ENCODE measurements at regions of chrX and their contacts with region 1.

Region 1: DNA sequence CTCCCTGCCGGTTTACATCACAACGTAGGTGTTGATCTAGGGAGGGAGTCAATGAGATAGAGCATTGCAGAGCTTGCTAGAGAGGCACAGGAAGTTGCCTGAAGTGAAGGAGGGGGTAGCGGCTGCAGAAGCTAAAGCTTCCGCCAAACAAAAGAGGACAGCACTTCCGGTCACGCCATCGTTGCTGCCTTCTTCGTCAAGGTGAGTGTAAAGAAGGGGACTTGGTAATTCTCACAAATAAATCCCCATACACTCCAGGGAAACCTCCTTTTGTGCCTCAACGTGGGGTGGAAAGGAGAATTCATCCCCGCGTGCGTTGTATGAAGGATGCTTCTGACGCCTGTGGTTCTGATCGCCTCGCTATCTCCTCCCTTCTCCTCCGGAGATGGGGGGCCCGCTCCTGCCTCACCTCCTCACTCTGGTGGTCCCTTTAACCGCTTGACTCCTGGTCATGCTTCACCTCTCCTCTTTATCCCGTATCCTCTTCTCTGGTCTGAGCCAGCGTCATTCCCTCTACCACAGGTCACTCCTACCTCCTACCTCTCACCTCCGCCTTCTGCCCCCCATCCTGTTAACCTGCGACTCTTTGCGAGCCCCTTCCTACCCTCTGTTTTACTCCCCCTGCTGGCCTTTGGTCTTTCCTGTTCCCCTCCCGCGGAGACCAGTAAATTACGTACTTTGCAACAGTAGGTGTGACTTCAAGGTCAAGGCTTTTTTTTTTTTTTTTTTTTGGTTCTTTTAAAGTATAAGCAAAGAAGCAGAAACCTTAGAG is 59.9 kb downstream of the GSPT2 start:
- DNase-seq: peak; percentile 6 to 61 (median 46)
- ATAC-seq: peak; percentile 90
- H3K4me3 ChIP-seq: peak overlapping the region; percentile 63
- H3K4me3 Mint-ChIP-seq: peak overlapping the region; percentile 93 to 99 (median 96)
- H3K27ac ChIP-seq: peak overlapping the region; percentile 74
- H3K27ac Mint-ChIP-seq: peak overlapping the region; percentile 93 to 99 (median 98)
- H3K4me1 ChIP-seq: peaks cover 5 to 8% of the 10 kb centered on the region in 2 donors
- H3K4me1 Mint-ChIP-seq: peaks cover 6 to 48% (median 27%) of the 10 kb centered on the region in 7 donors
- H3K27me3 ChIP-seq: no peaks in the 10 kb centered on the region
- H3K27me3 Mint-ChIP-seq: peaks cover 0 to 5% (median 0%) of the 10 kb centered on the region in 5 donors

Region 2: DNA sequence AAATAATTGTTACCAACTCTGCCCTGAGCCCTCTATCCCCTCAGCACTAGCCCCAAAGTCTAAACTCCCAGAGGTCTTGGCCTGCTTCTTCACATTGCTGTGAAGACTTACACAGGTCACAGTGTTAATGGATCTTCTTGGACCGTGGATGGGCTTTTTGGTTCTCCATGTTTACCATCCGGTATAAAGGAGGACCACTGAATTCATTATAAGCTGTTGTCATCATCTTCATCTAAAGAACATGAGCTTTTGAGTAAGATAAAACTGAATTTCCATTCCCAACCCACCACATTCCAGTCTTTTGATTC is 315.2 kb before region 1 on chrX:
- CTCF ChIA-PET with region 1: no interaction called
- POLR2A ChIA-PET with region 1: no interaction called
- intact Hi-C with region 1: loop called in 1 of 2 experiments (anchors 5 kb)
- DNase-seq: no peak
- ATAC-seq: no peak
- H3K4me3 ChIP-seq: no peak overlapping the region
- H3K4me3 Mint-ChIP-seq: no peak overlapping the region
- H3K27ac ChIP-seq: no peak overlapping the region
- H3K27ac Mint-ChIP-seq: no peak overlapping the region
- H3K4me1 ChIP-seq: no peaks in the 10 kb centered on the region
- H3K4me1 Mint-ChIP-seq: no peaks in the 10 kb centered on the region
- H3K27me3 ChIP-seq: no peaks in the 10 kb centered on the region
- H3K27me3 Mint-ChIP-seq: no peaks in the 10 kb centered on the region

Region 3: GRCh38 chrX:51614353-51615012 is 188.6 kb before region 1 on chrX:
- CTCF ChIA-PET with region 1: no interaction called
- POLR2A ChIA-PET with region 1: no interaction called
- intact Hi-C with region 1: loop called in 1 of 2 experiments (anchors 2 kb)
- DNase-seq: peak in 5 of 9 donors; percentile 2 to 24 (median 18)
- ATAC-seq: no peak
- H3K4me3 ChIP-seq: no peak overlapping the region
- H3K4me3 Mint-ChIP-seq: no peak overlapping the region
- H3K27ac ChIP-seq: no peak overlapping the region
- H3K27ac Mint-ChIP-seq: no peak overlapping the region
- H3K4me1 ChIP-seq: no peaks in the 10 kb centered on the region
- H3K4me1 Mint-ChIP-seq: peaks cover 0 to 8% (median 3%) of the 10 kb centered on the region in 7 donors
- H3K27me3 ChIP-seq: no peaks in the 10 kb centered on the region
- H3K27me3 Mint-ChIP-seq: peaks cover 17 to 38% (median 30%) of the 10 kb centered on the region in 5 donors

Region 4: GRCh38 chrX:51641421-51642021 is 161.6 kb before region 1 on chrX:
- CTCF ChIA-PET with region 1: no interaction called
- POLR2A ChIA-PET with region 1: no interaction called
- intact Hi-C with region 1: loop called in 1 of 2 experiments (anchors 5 kb)
- DNase-seq: peak in 5 of 9 donors; percentile 0 to 23 (median 9)
- ATAC-seq: no peak
- H3K4me3 ChIP-seq: no peak overlapping the region
- H3K4me3 Mint-ChIP-seq: no peak overlapping the region
- H3K27ac ChIP-seq: no peak overlapping the region
- H3K27ac Mint-ChIP-seq: no peak overlapping the region
- H3K4me1 ChIP-seq: no peaks in the 10 kb centered on the region
- H3K4me1 Mint-ChIP-seq: peaks cover 0 to 4% (median 0%) of the 10 kb centered on the region in 7 donors
- H3K27me3 ChIP-seq: no peaks in the 10 kb centered on the region
- H3K27me3 Mint-ChIP-seq: peaks cover 7 to 35% (median 18%) of the 10 kb centered on the region in 5 donors

Region 5: GRCh38 chrX:51743179-51743957 is 59.7 kb before region 1 on chrX and contains the start of gene GSPT2:
- CTCF ChIA-PET with region 1: no interaction called
- POLR2A ChIA-PET with region 1: interaction called, 5 read pairs
- intact Hi-C with region 1: loop called (anchors 1 kb)
- DNase-seq: peak; percentile 9 to 66 (median 58)
- ATAC-seq: peak; percentile 93
- H3K4me3 ChIP-seq: peak within 1 kb of the TSS; percentile 62
- H3K4me3 Mint-ChIP-seq: peak within 1 kb of the TSS; percentile 79 to 92 (median 86)
- H3K27ac ChIP-seq: peak within 1 kb of the TSS; percentile 46
- H3K27ac Mint-ChIP-seq: peak within 1 kb of the TSS; percentile 55 to 95 (median 85)
- H3K4me1 ChIP-seq: peaks cover 3 to 6% of the 10 kb centered on the region in 2 donors
- H3K4me1 Mint-ChIP-seq: peaks cover 8 to 28% (median 18%) of the 10 kb centered on the region in 7 donors
- H3K27me3 ChIP-seq: no peaks in the 10 kb centered on the region
- H3K27me3 Mint-ChIP-seq: peaks cover 0 to 6% (median 0%) of the 10 kb centered on the region in 5 donors
- total RNA-seq, gene GSPT2: 5.0 to 14.5 (median 13.1) TPM

Region 6: DNA sequence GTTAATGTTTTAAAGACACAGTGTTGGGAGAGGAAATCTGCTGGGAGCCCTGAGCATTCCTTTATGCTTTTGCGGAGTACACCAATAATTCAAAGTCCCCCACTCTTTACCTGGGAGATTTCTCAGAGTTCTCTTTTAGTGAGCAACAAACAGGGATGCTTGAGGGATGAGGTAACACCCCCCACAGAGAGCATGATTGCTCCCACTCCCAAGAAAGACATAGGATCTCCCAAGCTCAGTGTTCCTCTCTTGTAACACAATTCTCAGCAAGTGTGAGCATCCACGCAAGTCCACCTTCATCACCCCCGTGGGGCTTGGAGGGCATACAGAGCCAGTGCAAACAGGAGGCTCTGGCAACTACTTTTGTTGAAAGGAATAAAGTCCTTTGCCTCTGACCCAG is 23.8 kb before region 1 on chrX:
- CTCF ChIA-PET with region 1: no interaction called
- POLR2A ChIA-PET with region 1: no interaction called
- intact Hi-C with region 1: no loop called
- DNase-seq: no peak
- ATAC-seq: no peak
- H3K4me3 ChIP-seq: no peak overlapping the region
- H3K4me3 Mint-ChIP-seq: no peak overlapping the region
- H3K27ac ChIP-seq: no peak overlapping the region
- H3K27ac Mint-ChIP-seq: no peak overlapping the region
- H3K4me1 ChIP-seq: no peaks in the 10 kb centered on the region
- H3K4me1 Mint-ChIP-seq: no peaks in the 10 kb centered on the region
- H3K27me3 ChIP-seq: no peaks in the 10 kb centered on the region
- H3K27me3 Mint-ChIP-seq: peaks cover 0 to 10% (median 0%) of the 10 kb centered on the region in 5 donors

Region 7: DNA sequence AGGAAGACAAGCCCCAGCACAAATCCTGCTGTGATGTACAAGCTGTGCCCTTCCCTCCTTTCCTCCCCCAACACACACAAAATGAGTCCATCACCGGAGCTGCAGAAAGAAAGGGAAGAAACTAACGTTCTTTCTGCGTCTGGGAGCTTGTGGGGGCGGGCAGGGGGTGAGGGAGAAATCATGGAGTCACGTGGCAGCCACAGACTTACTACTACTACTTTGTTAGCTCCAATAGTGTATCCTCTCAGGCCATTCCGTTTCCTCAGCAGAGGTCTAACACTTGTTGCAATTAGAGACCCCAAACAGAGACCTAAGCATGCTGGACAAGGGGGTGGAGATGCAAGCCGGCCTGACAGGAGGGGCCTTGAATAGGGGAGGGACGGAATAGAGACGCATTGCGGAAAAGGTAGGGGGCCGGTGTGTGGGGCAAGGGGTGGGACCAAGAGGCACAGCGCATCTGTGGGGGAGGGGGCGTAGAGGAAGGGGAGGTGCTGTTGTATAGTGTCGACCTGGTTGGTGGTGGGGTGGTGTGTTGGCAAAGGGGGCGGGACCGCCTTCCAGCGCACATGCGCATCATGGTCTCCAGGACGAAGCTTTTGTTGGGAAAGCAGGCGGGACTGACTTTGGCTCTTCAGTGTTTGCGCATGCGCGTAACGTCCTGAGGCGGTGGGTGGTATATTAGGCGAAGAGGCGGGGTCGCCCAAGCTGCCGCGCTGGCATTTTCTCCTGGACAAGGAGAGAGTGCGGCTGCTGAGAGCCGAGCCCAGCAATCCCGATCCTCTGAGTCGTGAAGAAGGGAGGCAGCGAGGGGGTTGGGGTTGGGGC is 90.0 kb after region 1 on chrX and contains the start of gene MAGED1:
- CTCF ChIA-PET with region 1: no interaction called
- POLR2A ChIA-PET with region 1: no interaction called
- intact Hi-C with region 1: loop called (anchors 1 to 5 kb)
- DNase-seq: peak; percentile 25 to 80 (median 73)
- ATAC-seq: peak; percentile 93
- H3K4me3 ChIP-seq: peak within 1 kb of the TSS; percentile 50
- H3K4me3 Mint-ChIP-seq: peak within 1 kb of the TSS; percentile 88 to 98 (median 94)
- H3K27ac ChIP-seq: peak within 1 kb of the TSS; percentile 67
- H3K27ac Mint-ChIP-seq: peak within 1 kb of the TSS; percentile 85 to 95 (median 93)
- H3K4me1 ChIP-seq: peaks cover 0 to 3% of the 10 kb centered on the region in 2 donors
- H3K4me1 Mint-ChIP-seq: peaks cover 6 to 26% (median 19%) of the 10 kb centered on the region in 7 donors
- H3K27me3 ChIP-seq: no peaks in the 10 kb centered on the region
- H3K27me3 Mint-ChIP-seq: peaks cover 0 to 2% (median 0%) of the 10 kb centered on the region in 5 donors
- total RNA-seq, gene MAGED1: 26.3 to 41.9 (median 29.5) TPM

Region 8: DNA sequence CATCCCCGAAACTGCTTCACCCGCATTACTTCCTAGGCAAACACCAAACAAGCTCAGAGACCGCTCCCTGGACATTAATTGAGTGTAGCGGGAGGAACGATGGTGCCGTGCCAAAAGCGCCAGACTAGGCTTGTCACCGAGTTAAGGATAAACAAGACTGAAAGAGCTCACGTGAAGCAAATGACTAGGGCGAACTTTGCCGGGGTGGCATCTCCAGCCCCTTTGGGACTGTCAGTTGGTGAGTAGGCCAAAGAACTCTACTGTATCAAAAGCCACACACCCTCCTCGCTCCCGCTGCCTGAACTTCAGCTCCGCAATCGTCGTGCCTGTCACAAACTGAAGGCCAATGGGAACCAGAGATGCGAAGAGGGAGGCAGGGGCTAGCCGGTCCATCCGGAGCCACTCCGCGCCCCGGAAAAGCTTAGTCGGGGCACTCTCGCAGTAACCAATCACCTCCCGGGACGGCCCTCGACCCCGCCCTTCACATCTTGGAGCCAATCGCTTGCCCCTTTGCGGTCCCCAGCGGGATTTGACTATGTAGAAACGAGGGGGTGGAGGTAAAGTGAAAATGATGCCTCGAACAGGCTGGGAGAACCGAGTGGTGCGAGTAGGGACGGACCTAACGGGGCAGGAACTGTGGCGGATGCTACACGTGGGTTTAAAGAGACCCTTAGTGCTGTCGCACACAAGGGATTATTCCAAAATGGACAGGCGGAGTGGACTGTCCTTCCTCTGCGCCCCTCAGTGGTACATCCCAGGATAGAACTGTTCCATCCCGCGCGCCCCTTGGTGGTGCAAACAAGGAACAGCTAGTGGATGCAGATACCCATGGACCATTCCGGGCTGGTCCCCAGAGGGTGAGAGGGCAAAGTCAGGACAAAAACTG is 1192.3 kb after region 1 on chrX:
- CTCF ChIA-PET with region 1: no interaction called
- POLR2A ChIA-PET with region 1: no interaction called
- intact Hi-C with region 1: loop called in 1 of 2 experiments (anchors 1 kb)
- DNase-seq: peak; percentile 67 to 94 (median 91)
- ATAC-seq: peak; percentile 98
- H3K4me3 ChIP-seq: peak overlapping the region; percentile 92
- H3K4me3 Mint-ChIP-seq: peak overlapping the region; percentile 84 to 98 (median 94)
- H3K27ac ChIP-seq: peak overlapping the region; percentile 84
- H3K27ac Mint-ChIP-seq: peak overlapping the region; percentile 97 to 100 (median 99)
- H3K4me1 ChIP-seq: peaks cover 7 to 12% of the 10 kb centered on the region in 2 donors
- H3K4me1 Mint-ChIP-seq: peaks cover 11 to 25% (median 19%) of the 10 kb centered on the region in 7 donors
- H3K27me3 ChIP-seq: no peaks in the 10 kb centered on the region
- H3K27me3 Mint-ChIP-seq: peaks cover 0 to under 1% (median 0%) of the 10 kb centered on the region in 5 donors